CD4-positive, alpha-beta T cell (primary cell): ENCODE measurements at regions of chr7 and their contacts with region 1.

Region 1: DNA sequence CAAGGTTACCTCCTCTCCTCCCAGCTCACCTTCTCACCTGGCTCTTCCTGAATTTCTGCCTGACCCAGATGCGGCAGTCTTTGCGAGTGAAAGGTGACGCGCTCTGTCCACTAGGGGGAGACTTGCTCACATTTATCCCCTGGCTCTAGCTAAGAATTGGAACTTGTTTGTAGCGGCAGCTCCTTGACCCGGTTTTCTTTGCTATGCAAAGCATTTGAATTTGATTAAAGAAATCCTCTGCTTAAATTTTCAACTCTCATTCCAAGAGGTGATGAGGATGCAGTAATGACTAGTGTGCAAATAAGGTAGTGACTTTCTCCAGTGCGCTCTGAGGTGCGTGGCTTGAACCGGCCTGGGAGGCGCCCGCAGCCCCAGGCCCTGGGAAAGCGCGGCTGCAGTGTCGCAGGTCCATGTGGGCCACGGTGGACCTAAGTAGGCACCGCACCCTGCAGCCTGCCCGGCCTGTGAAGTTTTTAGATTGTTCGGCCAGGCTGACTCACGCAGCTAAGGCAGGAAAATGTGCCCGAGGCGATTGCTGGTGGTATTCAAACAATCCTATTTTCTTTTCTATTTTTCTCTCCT is 336.9 kb upstream of the NPSR1 start:
- DNase-seq: peak in 10 of 14 experiments; percentile 3 to 54 (median 26)
- ATAC-seq: peak; percentile 56
- H3K4me3 ChIP-seq: no peak overlapping the region
- H3K4me3 Mint-ChIP-seq: no peak overlapping the region
- H3K27ac ChIP-seq: no peak overlapping the region
- H3K27ac Mint-ChIP-seq: no peak overlapping the region
- H3K4me1 ChIP-seq: peaks cover 3% of the 10 kb centered on the region
- H3K4me1 Mint-ChIP-seq: no peaks in the 10 kb centered on the region
- H3K27me3 ChIP-seq: peaks cover 0 to 8% of the 10 kb centered on the region in 2 experiments
- H3K27me3 Mint-ChIP-seq: peaks cover 24% of the 10 kb centered on the region
- CTCF ChIP-seq: peak; percentile 71

Region 2: DNA sequence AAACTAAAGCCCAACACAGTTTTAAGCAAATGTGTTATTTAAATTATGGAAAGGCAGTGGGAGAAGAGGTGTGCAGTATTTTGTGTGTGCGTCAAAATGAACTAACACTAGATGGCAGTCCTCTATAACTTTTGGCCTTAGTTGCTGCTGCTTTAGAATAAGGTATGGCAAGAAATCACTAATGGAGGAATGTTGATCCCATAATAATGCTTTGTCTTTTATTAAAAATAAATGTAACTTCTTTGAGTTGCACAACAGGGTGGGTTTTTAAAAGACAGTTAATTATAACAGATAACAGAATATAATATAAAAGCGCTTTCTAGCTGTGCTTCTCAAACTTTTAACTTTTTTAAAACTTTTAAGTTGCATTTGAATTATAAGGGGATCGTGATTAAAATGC is 1135.3 kb before region 1 on chr7:
- CTCF ChIA-PET with region 1: no interaction called
- POLR2A ChIA-PET with region 1: no interaction called
- intact Hi-C with region 1: loop called in 1 of 2 experiments (anchors 5 kb)
- DNase-seq: peak in 4 of 14 experiments; percentile 6 to 60 (median 55)
- ATAC-seq: no peak
- H3K4me3 ChIP-seq: no peak overlapping the region
- H3K4me3 Mint-ChIP-seq: no peak overlapping the region
- H3K27ac ChIP-seq: no peak overlapping the region
- H3K27ac Mint-ChIP-seq: no peak overlapping the region
- H3K4me1 ChIP-seq: peaks cover 4% of the 10 kb centered on the region
- H3K4me1 Mint-ChIP-seq: peaks cover 9% of the 10 kb centered on the region
- H3K27me3 ChIP-seq: no peaks in the 10 kb centered on the region
- H3K27me3 Mint-ChIP-seq: no peaks in the 10 kb centered on the region
- CTCF ChIP-seq: peak; percentile 53

Region 3: GRCh38 chr7:34222733-34223132 is 98.4 kb before region 1 on chr7:
- CTCF ChIA-PET with region 1: no interaction called
- POLR2A ChIA-PET with region 1: no interaction called
- intact Hi-C with region 1: no loop called
- DNase-seq: no peak
- ATAC-seq: no peak
- H3K4me3 ChIP-seq: no peak overlapping the region
- H3K4me3 Mint-ChIP-seq: no peak overlapping the region
- H3K27ac ChIP-seq: no peak overlapping the region
- H3K27ac Mint-ChIP-seq: no peak overlapping the region
- H3K4me1 ChIP-seq: no peaks in the 10 kb centered on the region
- H3K4me1 Mint-ChIP-seq: no peaks in the 10 kb centered on the region
- H3K27me3 ChIP-seq: no peaks in the 10 kb centered on the region
- H3K27me3 Mint-ChIP-seq: no peaks in the 10 kb centered on the region
- CTCF ChIP-seq: no peak

Region 4: DNA sequence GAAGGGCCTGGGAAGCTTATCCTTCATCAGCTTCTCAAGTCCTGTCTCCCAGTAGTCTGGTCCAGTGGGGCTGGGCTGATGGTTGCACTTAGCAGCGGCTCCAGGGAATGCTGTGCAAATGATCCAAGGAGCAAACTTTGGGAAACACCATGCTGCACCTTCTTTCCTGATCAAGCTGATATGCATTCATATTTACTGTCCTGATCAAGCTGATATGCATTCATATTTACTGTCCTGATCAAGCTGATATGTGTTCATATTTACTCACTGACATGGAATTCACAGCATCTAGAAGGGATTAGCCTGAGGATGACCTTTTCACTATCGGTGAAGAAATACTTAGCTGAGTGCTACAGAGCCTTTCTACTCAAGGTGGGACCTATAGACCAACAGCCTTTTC is 85.0 kb before region 1 on chr7:
- CTCF ChIA-PET with region 1: no interaction called
- POLR2A ChIA-PET with region 1: no interaction called
- intact Hi-C with region 1: no loop called
- DNase-seq: no peak
- ATAC-seq: no peak
- H3K4me3 ChIP-seq: no peak overlapping the region
- H3K4me3 Mint-ChIP-seq: no peak overlapping the region
- H3K27ac ChIP-seq: no peak overlapping the region
- H3K27ac Mint-ChIP-seq: no peak overlapping the region
- H3K4me1 ChIP-seq: no peaks in the 10 kb centered on the region
- H3K4me1 Mint-ChIP-seq: no peaks in the 10 kb centered on the region
- H3K27me3 ChIP-seq: no peaks in the 10 kb centered on the region
- H3K27me3 Mint-ChIP-seq: no peaks in the 10 kb centered on the region
- CTCF ChIP-seq: no peak

Region 5: DNA sequence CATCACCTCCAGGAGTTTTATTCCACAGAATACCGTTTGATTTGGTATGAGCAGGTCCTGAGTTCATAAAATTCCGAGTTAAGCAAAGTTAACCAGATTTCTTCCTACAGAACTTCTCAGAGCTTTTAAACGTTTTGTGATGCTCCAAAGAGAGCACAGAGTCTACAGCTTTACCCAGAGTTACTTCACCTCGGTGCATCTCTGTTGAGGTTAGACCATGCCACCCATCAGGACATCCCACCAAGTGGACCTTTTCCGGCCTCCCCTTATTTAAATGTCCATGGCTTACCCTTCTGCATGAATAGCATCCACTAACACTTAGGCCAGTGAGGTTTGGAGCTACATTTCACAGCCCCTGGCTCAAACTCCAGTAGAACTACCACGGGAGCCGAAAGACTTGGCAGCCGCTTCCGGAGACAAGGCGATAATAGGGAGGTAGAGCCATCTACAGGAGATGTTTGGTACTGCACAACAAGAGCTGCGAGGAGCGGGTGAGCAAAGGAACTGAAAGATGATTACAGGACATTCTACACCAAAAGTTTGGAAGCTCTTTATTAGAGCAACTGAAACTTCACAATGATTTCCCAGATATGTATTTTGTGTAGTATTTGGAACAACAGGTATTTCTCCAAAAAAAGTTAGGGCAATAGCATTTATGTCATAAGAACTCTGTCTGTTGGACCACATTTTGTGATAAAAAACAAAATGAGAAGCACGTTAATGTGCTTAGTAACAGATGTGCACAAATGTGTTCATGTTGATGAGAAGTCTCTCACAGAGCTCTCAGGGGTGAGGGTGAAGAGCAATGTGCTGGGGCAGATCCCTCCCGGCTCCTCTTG is 1199.1 kb after region 1 on chr7:
- CTCF ChIA-PET with region 1: no interaction called
- POLR2A ChIA-PET with region 1: no interaction called
- intact Hi-C with region 1: loop called in 1 of 2 experiments (anchors 5 kb)
- DNase-seq: peak in 13 of 14 experiments; percentile 8 to 74 (median 26)
- ATAC-seq: peak; percentile 68
- H3K4me3 ChIP-seq: no peak overlapping the region
- H3K4me3 Mint-ChIP-seq: no peak overlapping the region
- H3K27ac ChIP-seq: no peak overlapping the region
- H3K27ac Mint-ChIP-seq: no peak overlapping the region
- H3K4me1 ChIP-seq: no peaks in the 10 kb centered on the region
- H3K4me1 Mint-ChIP-seq: no peaks in the 10 kb centered on the region
- H3K27me3 ChIP-seq: no peaks in the 10 kb centered on the region
- H3K27me3 Mint-ChIP-seq: peaks cover 11% of the 10 kb centered on the region
- CTCF ChIP-seq: peak; percentile 53

Region 6: GRCh38 chr7:35537067-35538023 is 1216.3 kb after region 1 on chr7:
- CTCF ChIA-PET with region 1: no interaction called
- POLR2A ChIA-PET with region 1: no interaction called
- intact Hi-C with region 1: loop called in 1 of 2 experiments (anchors 5 kb)
- DNase-seq: peak; percentile 54 to 87 (median 74)
- ATAC-seq: peak; percentile 99
- H3K4me3 ChIP-seq: peak overlapping the region; percentile 37
- H3K4me3 Mint-ChIP-seq: peak overlapping the region; percentile 81
- H3K27ac ChIP-seq: no peak overlapping the region
- H3K27ac Mint-ChIP-seq: no peak overlapping the region
- H3K4me1 ChIP-seq: peaks cover 7% of the 10 kb centered on the region
- H3K4me1 Mint-ChIP-seq: peaks cover 5% of the 10 kb centered on the region
- H3K27me3 ChIP-seq: peaks cover 0 to 5% of the 10 kb centered on the region in 2 experiments
- H3K27me3 Mint-ChIP-seq: peaks cover 15% of the 10 kb centered on the region
- CTCF ChIP-seq: peak; percentile 96

Region 7: GRCh38 chr7:35624299-35625186 is 1303.5 kb after region 1 on chr7:
- CTCF ChIA-PET with region 1: no interaction called
- POLR2A ChIA-PET with region 1: no interaction called
- intact Hi-C with region 1: loop called in 1 of 2 experiments (anchors 10 kb)
- DNase-seq: peak; percentile 5 to 71 (median 20)
- ATAC-seq: peak; percentile 92
- H3K4me3 ChIP-seq: no peak overlapping the region
- H3K4me3 Mint-ChIP-seq: no peak overlapping the region
- H3K27ac ChIP-seq: no peak overlapping the region
- H3K27ac Mint-ChIP-seq: no peak overlapping the region
- H3K4me1 ChIP-seq: peaks cover 5% of the 10 kb centered on the region
- H3K4me1 Mint-ChIP-seq: peaks cover 5% of the 10 kb centered on the region
- H3K27me3 ChIP-seq: no peaks in the 10 kb centered on the region
- H3K27me3 Mint-ChIP-seq: no peaks in the 10 kb centered on the region
- CTCF ChIP-seq: peak; percentile 80